HCT116 (cell line): ENCODE measurements at regions of chr4 and their contacts with region 1.

Region 1: GRCh38 chr4:169810325-169811323 is 52.9 kb upstream of the HPF1 start:
- DNase-seq: peak; percentile 84
- ATAC-seq: peak; percentile 89
- H3K4me3 ChIP-seq: no peak overlapping the region
- H3K27ac ChIP-seq: no peak overlapping the region
- H3K4me1 ChIP-seq: peaks cover 0 to 3% of the 10 kb centered on the region in 2 experiments; a peak in 2 of 4 replicates
- H3K27me3 ChIP-seq: no peaks in the 10 kb centered on the region
- CTCF ChIP-seq: peak; percentile 72 to 87 (median 86)
- POLR2A ChIP-seq: no peak
- RAD21 ChIP-seq: peak; percentile 87

Region 2: DNA sequence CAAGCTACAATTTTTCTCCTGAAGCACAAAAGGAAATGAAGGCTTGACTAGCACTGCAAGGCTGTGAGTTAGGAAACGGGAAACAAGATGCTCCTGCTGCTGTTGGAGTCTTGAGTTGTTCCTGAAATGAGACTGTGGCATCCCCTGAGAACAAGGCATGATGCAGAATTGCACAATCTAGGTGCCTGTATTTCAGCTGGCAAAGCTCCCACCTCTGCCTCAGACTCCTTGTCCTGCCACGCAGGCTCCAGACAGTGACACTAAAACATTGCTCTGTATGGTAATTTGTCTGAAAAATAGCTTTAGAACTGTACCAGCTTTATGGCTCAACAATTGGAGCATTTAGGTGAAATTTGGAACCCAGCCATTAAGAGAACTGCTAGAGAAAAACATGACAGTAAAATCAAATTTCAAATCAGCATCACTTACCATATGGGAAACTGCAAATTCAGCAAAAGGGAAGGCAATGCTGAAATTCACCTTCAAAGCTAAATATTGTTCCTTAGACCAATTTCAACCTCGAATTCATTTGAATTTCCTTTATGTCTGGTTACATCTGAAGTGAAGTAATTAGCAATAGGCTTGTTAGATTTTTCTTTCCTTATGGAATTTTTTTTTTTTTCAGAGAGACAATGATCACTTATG is 112.1 kb after region 1 on chr4:
- CTCF ChIA-PET with region 1: no interaction called
- POLR2A ChIA-PET with region 1: no interaction called
- RAD21 ChIA-PET with region 1: no interaction called
- intact Hi-C with region 1: no loop called
- DNase-seq: no peak
- ATAC-seq: no peak
- H3K4me3 ChIP-seq: no peak overlapping the region
- H3K27ac ChIP-seq: no peak overlapping the region
- H3K4me1 ChIP-seq: peaks cover 0 to 14% of the 10 kb centered on the region in 2 experiments; a peak in 2 of 4 replicates
- H3K27me3 ChIP-seq: no peaks in the 10 kb centered on the region
- CTCF ChIP-seq: no peak
- POLR2A ChIP-seq: no peak
- RAD21 ChIP-seq: no peak

Region 3: DNA sequence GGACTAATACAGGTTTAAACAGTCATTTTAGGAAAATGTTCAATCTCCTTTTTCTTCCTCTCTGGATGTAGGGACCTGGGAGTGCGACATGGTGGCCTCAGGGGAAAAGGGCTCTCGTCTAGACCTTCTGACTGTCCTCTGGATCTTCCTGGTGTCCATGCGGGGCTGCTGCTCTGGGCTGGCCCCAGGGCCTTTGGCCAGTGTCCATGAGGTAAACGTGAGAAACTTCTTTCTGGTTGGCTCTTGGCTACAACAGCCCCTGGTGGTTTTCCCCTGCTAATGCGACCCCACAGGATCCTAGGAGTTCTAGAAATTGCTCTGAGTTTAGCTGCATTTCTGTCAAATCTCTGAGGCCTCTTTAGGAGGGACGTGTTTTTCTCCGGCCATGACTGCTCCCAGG is 129.8 kb after region 1 on chr4:
- CTCF ChIA-PET with region 1: interaction called, 4 read pairs
- POLR2A ChIA-PET with region 1: no interaction called
- RAD21 ChIA-PET with region 1: no interaction called
- intact Hi-C with region 1: loop called (anchors 5 kb)
- DNase-seq: no peak
- ATAC-seq: peak; percentile 64
- H3K4me3 ChIP-seq: no peak overlapping the region
- H3K27ac ChIP-seq: no peak overlapping the region
- H3K4me1 ChIP-seq: peaks cover 5 to 44% of the 10 kb centered on the region in 2 experiments; a peak in 2 of 4 replicates
- H3K27me3 ChIP-seq: no peaks in the 10 kb centered on the region
- CTCF ChIP-seq: peak; percentile 15 to 63 (median 48); a peak in 4 of 6 replicates
- POLR2A ChIP-seq: no peak
- RAD21 ChIP-seq: peak; percentile 26; the same call in 1 of the 2 replicates

Region 4: GRCh38 chr4:170027181-170027829 is 216.7 kb after region 1 on chr4:
- CTCF ChIA-PET with region 1: interaction called, 17 read pairs
- POLR2A ChIA-PET with region 1: no interaction called
- RAD21 ChIA-PET with region 1: no interaction called
- intact Hi-C with region 1: loop called (anchors 1 kb)
- DNase-seq: peak; percentile 95
- ATAC-seq: peak; percentile 72
- H3K4me3 ChIP-seq: peak overlapping the region; percentile 77 to 82
- H3K27ac ChIP-seq: peak overlapping the region; percentile 75
- H3K4me1 ChIP-seq: peaks cover 2 to 16% of the 10 kb centered on the region in 2 experiments
- H3K27me3 ChIP-seq: no peaks in the 10 kb centered on the region
- CTCF ChIP-seq: no peak
- POLR2A ChIP-seq: no peak
- RAD21 ChIP-seq: no peak

Region 5: DNA sequence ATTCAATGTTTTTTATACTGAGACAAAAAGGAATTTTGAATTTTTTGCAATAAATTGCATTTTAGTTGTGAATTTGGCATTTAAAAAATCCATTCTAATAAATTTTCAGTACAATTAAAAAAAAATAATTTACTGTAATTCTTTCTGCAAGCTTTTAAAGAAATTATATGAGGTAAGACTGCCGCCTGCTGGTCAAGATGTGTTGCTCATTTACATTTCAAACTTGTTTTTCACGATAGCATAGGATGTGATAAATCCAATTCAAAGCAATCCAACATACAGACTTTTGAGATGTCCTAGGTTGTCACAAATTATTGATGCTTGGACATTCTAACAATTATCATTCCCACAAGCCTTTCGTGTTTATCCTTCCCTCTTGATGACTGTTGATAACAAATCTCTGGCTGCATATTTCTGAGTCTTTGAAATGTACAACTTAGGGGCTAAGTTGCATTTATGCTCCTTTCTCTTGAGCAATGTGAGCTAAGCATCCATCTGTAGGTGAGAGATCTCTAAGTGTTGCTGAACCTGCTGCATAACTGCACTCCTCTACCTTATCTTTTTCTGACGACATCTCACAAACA is 237.2 kb after region 1 on chr4:
- CTCF ChIA-PET with region 1: interaction called, 41 read pairs
- POLR2A ChIA-PET with region 1: no interaction called
- RAD21 ChIA-PET with region 1: interaction called, 6 to 7 read pairs
- intact Hi-C with region 1: loop called (anchors 1 kb)
- DNase-seq: peak; percentile 57
- ATAC-seq: 0 out of 2 replicates have a peak, but pooled peaks have one; percentile 55
- H3K4me3 ChIP-seq: no peak overlapping the region
- H3K27ac ChIP-seq: no peak overlapping the region
- H3K4me1 ChIP-seq: no peaks in the 10 kb centered on the region
- H3K27me3 ChIP-seq: no peaks in the 10 kb centered on the region
- CTCF ChIP-seq: peak; percentile 54 to 85 (median 72)
- POLR2A ChIP-seq: no peak
- RAD21 ChIP-seq: peak; percentile 89

Region 6: GRCh38 chr4:170089668-170090351 is 279.2 kb after region 1 on chr4 and contains the start of gene AADAT:
- CTCF ChIA-PET with region 1: interaction called, 4 read pairs
- POLR2A ChIA-PET with region 1: no interaction called
- RAD21 ChIA-PET with region 1: no interaction called
- intact Hi-C with region 1: loop called (anchors 5 kb)
- DNase-seq: peak; percentile 73
- ATAC-seq: peak; percentile 92
- H3K4me3 ChIP-seq: peak within 1 kb of the TSS; percentile 73 to 94
- H3K27ac ChIP-seq: peak within 1 kb of the TSS; percentile 54
- H3K4me1 ChIP-seq: peaks cover 9 to 20% of the 10 kb centered on the region in 2 experiments
- H3K27me3 ChIP-seq: no peaks in the 10 kb centered on the region
- CTCF ChIP-seq: peak; percentile 61 to 79 (median 70)
- POLR2A ChIP-seq: peak; percentile 29
- RAD21 ChIP-seq: peak; percentile 92
- total RNA-seq, gene AADAT: 15.4 TPM

Region 7: GRCh38 chr4:170623897-170624296 is 813.3 kb after region 1 on chr4:
- CTCF ChIA-PET with region 1: no interaction called
- POLR2A ChIA-PET with region 1: no interaction called
- RAD21 ChIA-PET with region 1: no interaction called
- intact Hi-C with region 1: no loop called
- DNase-seq: no peak
- ATAC-seq: no peak
- H3K4me3 ChIP-seq: no peak overlapping the region
- H3K27ac ChIP-seq: no peak overlapping the region
- H3K4me1 ChIP-seq: no peaks in the 10 kb centered on the region
- H3K27me3 ChIP-seq: no peaks in the 10 kb centered on the region
- CTCF ChIP-seq: peak in 2 of 3 experiments; percentile 26 to 28; a peak in 3 of 6 replicates
- POLR2A ChIP-seq: no peak
- RAD21 ChIP-seq: no peak